ENCODE measurements at regions of chr19 and their contacts with region 1.

Region 1: GRCh38 chr19:48271531-48272151 is 1.8 kb downstream of the ZNF114 start:
- DNase-seq: no peak
- H3K4me3 ChIP-seq: peak overlapping the region; percentile 28
- H3K27me3 ChIP-seq: no peaks in the 10 kb centered on the region
- CTCF ChIP-seq: no peak

Region 2: GRCh38 chr19:48218997-48219396 is 52.6 kb before region 1 on chr19:
- CTCF ChIA-PET with region 1: no interaction called
- POLR2A ChIA-PET with region 1: no interaction called
- DNase-seq: no peak
- H3K4me3 ChIP-seq: no peak overlapping the region
- H3K27me3 ChIP-seq: no peaks in the 10 kb centered on the region
- CTCF ChIP-seq: no peak

Region 3: GRCh38 chr19:48255376-48256303 is 16.0 kb before region 1 on chr19 and contains the start of gene CARD8:
- CTCF ChIA-PET with region 1: interaction called, 13 read pairs
- POLR2A ChIA-PET with region 1: no interaction called
- DNase-seq: peak; percentile 47
- H3K4me3 ChIP-seq: peak within 1 kb of the TSS; percentile 66
- H3K27me3 ChIP-seq: no peaks in the 10 kb centered on the region
- CTCF ChIP-seq: no peak
- polyA plus RNA-seq, gene CARD8: 15.0 and 16.1 TPM in 2 replicates

Measured in BJ (cell line).